ENCODE measurements at regions of chr5 and their contacts with region 1.

Region 1: DNA sequence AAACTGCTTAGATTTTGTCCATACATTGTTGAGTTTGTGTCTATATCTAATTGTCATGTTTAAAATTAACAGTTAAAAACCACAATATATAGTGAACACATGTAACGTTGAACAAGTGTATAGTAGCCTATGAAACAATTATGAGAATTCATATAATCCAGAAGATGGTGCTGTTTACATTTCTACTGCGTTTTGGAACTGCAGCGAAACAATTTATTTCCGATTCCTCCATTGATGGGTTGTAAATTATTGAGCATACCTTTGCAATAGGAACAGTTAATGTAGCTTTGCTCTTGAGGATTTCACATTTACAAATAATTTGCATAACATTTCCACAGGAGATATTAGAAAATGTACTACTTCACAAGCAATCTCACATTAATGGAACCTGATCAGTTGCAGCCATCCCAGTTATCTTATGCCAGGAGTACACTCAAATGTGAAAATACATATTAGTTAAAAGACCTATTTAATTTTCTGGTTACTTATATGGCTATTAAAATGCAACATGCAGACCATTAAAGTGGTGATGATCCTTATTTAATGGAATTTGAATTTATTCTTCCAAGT is 411.8 kb downstream of the CDH10 start:
- DNase-seq: no peak
- H3K4me3 ChIP-seq: no peak overlapping the region
- H3K4me3 Mint-ChIP-seq: no peak overlapping the region
- H3K27ac Mint-ChIP-seq: no peak overlapping the region
- H3K4me1 ChIP-seq: no peaks in the 10 kb centered on the region; the same call in 1 of the 2 replicates
- H3K4me1 Mint-ChIP-seq: peaks cover 13% of the 10 kb centered on the region
- H3K27me3 ChIP-seq: no peaks in the 10 kb centered on the region
- H3K27me3 Mint-ChIP-seq: no peaks in the 10 kb centered on the region
- CTCF ChIP-seq: no peak

Region 2: GRCh38 chr5:24530907-24531306 is 297.9 kb after region 1 on chr5:
- CTCF ChIA-PET with region 1: no interaction called
- POLR2A ChIA-PET with region 1: no interaction called
- intact Hi-C with region 1: loop called (anchors 1 kb)
- DNase-seq: no peak
- H3K4me3 ChIP-seq: no peak overlapping the region
- H3K4me3 Mint-ChIP-seq: no peak overlapping the region
- H3K27ac Mint-ChIP-seq: no peak overlapping the region
- H3K4me1 ChIP-seq: no peaks in the 10 kb centered on the region
- H3K4me1 Mint-ChIP-seq: no peaks in the 10 kb centered on the region
- H3K27me3 ChIP-seq: no peaks in the 10 kb centered on the region
- H3K27me3 Mint-ChIP-seq: no peaks in the 10 kb centered on the region
- CTCF ChIP-seq: no peak

Region 3: DNA sequence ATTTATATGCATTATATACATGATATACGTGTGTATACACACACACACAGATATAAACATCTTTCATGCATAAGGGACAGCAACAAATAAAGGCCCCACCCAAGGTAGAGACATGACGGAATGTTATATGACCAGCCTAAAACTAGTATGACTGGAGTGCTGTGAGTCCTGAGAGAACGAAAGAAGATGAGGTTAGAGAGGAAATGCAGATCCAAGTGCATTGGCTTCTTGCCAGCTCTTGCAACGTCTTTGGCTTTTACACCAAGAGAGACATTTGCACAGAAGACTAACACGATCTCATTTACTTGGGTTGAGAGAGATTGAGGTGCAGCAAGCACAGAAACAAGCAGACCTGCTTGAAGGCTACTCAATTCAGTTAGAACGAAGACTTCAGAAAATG is 388.8 kb after region 1 on chr5:
- CTCF ChIA-PET with region 1: no interaction called
- POLR2A ChIA-PET with region 1: no interaction called
- intact Hi-C with region 1: no loop called
- DNase-seq: no peak
- H3K4me3 ChIP-seq: no peak overlapping the region
- H3K4me3 Mint-ChIP-seq: no peak overlapping the region
- H3K27ac Mint-ChIP-seq: no peak overlapping the region
- H3K4me1 ChIP-seq: no peaks in the 10 kb centered on the region
- H3K4me1 Mint-ChIP-seq: no peaks in the 10 kb centered on the region
- H3K27me3 ChIP-seq: no peaks in the 10 kb centered on the region
- H3K27me3 Mint-ChIP-seq: peaks cover 3% of the 10 kb centered on the region
- CTCF ChIP-seq: no peak

Region 4: GRCh38 chr5:24642022-24642421 is 409.0 kb after region 1 on chr5:
- CTCF ChIA-PET with region 1: no interaction called
- POLR2A ChIA-PET with region 1: no interaction called
- intact Hi-C with region 1: loop called (anchors 2 kb)
- DNase-seq: peak in 1 of 2 experiments; percentile 25
- H3K4me3 ChIP-seq: no peak overlapping the region
- H3K4me3 Mint-ChIP-seq: no peak overlapping the region
- H3K27ac Mint-ChIP-seq: no peak overlapping the region
- H3K4me1 ChIP-seq: no peaks in the 10 kb centered on the region
- H3K4me1 Mint-ChIP-seq: no peaks in the 10 kb centered on the region
- H3K27me3 ChIP-seq: no peaks in the 10 kb centered on the region
- H3K27me3 Mint-ChIP-seq: peaks cover 3% of the 10 kb centered on the region
- CTCF ChIP-seq: peak; percentile 42 to 47